ENCODE measurements at regions of chr2 and their contacts with region 1.

Region 1: DNA sequence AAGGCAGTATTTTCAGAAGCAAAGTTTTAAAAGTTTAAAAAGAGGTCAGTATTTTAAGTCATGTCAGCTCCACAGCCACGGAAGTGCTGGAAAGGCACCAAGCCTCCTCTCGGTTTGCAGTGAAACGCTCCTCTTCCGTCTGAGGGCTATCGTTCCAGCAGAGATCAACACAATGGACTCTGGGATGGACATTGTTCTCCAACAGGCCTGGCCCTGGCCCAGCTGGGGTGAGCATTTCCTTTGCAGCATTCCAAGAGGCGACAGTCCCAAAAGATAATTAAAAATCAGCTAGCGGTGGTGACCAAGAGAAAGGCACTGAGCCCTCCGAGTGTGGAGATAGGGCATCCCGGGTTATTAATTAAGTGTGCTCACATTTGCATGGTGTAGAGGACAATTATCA is 95.9 kb upstream of the LCLAT1 start:
- DNase-seq: peak; percentile 66
- H3K4me3 ChIP-seq: peak overlapping the region; percentile 4
- H3K27ac ChIP-seq: peak overlapping the region; percentile 86
- H3K4me1 ChIP-seq: peaks cover 74% of the 10 kb centered on the region
- H3K27me3 ChIP-seq: no peaks in the 10 kb centered on the region
- CTCF ChIP-seq: no peak

Region 2: GRCh38 chr2:30231212-30231995 is 119.7 kb before region 1 on chr2 and contains the start of gene LBH:
- intact Hi-C with region 1: loop called (anchors 10 kb)
- DNase-seq: peak; percentile 90
- H3K4me3 ChIP-seq: peak within 1 kb of the TSS; percentile 92
- H3K27ac ChIP-seq: peak within 1 kb of the TSS; percentile 99
- H3K4me1 ChIP-seq: peaks cover 67% of the 10 kb centered on the region
- H3K27me3 ChIP-seq: no peaks in the 10 kb centered on the region
- CTCF ChIP-seq: no peak
- total RNA-seq, gene LBH: 200 TPM

Region 3: DNA sequence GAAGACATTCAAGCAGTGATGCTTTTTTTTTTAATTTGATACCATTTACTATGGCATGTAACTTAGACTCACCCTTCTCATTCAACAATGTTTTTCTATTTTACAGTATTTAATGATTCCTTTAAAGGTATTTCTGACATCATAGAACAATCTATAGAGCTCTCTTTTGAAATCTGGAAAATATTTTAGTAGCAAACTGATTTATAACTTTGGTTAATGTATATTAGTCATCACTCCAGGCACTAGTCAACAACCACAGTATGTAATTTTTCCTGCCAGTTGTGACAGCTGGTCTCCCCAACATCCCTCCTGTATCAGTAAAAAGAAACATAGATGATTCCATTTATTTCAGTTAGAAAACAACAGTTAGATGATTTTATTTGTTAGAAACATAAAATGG is 218.8 kb after region 1 on chr2:
- intact Hi-C with region 1: no loop called
- DNase-seq: no peak
- H3K4me3 ChIP-seq: no peak overlapping the region
- H3K27ac ChIP-seq: no peak overlapping the region
- H3K4me1 ChIP-seq: peaks cover 28% of the 10 kb centered on the region
- H3K27me3 ChIP-seq: no peaks in the 10 kb centered on the region
- CTCF ChIP-seq: no peak

Measured in left ventricle myocardium inferior (tissue), 1 donor.